ENCODE measurements at regions of chr17 and their contacts with region 1.

Region 1: DNA sequence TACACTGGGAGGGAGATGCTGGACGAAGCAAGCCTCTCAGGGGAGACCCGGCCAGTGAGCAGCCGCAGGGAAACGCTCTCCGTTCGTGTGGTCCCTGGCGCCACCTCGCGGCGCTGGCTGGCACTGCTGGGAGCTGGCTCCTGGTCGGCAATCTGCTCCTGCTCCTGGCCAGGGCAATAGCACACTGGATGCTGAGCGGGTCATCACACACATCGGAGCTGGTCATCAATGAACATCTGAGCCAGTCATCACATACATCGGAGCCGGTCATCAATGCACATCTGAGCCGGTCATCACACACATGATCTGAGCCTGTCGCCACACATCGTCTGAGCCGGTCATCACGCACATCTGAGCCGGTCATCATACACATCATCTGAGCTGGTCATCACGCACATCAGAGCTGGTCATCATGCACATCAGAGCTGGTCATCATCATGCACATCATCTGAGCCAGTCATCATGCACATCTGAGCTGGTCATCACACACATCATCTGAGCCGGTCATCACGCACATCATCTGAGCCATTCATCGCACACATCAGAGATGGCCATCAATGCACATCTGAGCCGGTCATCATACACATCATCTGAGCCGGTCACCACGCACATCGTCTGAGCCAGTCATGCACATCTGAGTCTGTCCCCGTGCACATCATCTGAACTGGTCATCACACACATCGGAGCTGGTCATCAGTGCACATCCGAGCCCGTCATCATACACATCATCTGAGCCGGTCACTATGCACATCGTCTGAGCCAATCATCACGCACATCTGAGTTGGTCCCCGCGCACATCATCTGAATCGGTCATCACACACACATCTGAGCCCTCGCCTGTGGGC is 217.3 kb downstream of the RBFOX3 start:
- DNase-seq: peak; percentile 84
- CTCF ChIP-seq: peak; percentile 94

Region 2: DNA sequence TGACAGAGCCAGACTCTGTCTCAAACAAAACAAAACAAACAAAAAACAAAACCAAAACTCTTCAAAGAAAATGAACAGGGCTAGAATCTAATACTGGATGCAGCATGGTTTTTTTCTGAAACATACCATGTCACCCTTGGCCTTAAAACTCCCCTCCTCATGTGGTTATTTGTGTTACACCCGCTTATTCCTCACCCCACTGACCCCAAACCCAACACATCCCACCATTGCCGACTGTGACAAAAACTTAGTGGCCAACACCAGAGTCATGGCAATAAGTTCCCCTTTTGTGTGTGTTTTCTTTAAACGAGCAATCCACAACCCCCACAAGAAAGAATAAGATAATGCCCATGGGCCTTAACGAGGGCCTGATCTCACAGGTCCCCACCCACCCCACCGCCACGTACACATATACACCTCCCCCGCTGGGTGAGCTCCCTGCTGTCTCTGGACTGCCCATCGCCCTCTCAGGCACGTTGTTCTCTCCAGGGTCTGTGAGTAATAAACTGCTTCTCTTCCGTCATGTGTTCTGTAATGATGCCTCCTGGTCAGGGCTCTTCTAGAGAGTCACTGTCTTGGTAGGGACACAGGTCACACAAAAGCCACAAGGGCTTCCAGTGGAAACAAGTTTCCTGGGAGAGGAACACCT is 335.7 kb before region 1 on chr17:
- CTCF ChIA-PET with region 1: interaction called, 33 read pairs
- POLR2A ChIA-PET with region 1: no interaction called
- DNase-seq: peak; percentile 11
- CTCF ChIP-seq: no peak

Region 3: DNA sequence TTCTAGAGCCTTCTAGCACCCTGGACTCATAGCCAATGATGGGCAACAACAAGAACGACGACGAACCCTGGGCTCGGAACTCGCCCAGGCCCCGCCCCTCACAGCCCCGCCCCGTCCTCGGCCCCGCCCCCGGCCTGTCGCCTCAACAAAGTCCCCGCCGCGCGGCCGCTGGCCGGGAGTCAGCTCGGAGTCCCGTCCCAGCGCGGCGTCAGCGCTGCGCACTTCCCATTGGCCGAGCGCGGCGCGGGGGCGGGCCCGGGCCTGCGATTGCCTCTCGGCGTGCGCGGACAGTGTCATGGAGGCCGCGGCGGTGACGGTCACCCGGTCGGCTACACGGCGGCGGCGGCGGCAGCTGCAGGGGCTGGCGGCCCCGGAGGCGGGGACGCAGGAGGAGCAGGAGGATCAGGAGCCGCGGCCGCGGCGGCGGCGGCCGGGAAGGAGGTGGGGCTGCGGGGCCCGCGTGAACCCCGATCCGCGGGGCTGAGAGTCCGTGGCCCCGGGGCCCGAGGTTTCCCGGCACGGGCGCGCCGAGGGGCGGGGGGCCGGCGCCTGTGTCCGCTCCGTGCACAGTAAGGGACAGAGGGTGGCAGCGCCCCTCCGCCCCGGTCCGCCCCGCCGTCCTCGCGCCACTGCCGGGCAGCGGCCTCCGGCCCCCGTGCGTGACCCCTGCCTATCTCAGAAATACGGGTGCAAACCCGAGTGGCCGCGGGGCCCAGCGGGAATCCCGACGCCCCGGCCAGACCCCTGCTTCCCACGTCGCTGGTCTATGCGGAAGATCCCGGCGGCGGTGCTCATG is 318.7 kb before region 1 on chr17 and contains the start of gene ENGASE:
- CTCF ChIA-PET with region 1: interaction called, 13 read pairs
- POLR2A ChIA-PET with region 1: interaction called, 4 read pairs
- DNase-seq: peak; percentile 99
- CTCF ChIP-seq: no peak

Region 4: DNA sequence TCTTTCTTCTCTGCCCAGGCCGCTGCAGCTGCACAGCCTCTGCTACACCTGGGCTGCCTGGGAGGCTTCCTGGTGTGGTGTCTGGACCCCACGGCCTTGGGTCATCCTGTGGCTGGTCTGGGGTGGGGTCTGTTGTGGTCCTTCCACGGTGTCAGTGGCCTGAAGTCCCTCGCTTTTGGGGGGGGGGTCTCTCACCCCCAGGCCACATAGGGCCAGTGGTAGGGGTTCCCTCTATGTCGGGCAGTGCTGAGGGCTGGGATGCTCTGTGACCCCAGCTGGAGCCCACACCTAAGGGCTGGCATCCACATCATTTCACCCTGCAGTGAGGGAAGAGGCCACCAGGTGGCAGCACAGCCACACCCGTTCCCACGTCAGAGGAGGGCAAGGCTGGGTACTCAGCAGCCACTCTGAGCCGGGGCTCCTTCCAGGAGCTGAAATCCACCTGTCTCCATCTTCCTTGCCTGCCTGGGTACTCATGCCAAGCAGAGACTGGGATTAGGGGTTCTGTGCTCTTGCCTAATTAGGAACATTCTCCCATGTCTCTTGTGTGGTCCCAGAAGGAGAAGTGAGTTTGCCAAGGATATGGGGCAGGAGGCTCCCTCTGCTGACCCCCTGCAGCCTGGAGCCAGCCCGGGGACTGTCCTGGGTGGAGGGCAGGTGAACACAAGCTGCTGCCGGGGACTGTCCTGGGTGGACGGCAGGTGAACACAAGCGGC is 306.0 kb before region 1 on chr17:
- CTCF ChIA-PET with region 1: interaction called, 204 read pairs
- POLR2A ChIA-PET with region 1: no interaction called
- DNase-seq: peak; percentile 85
- CTCF ChIP-seq: peak; percentile 86

Region 5: DNA sequence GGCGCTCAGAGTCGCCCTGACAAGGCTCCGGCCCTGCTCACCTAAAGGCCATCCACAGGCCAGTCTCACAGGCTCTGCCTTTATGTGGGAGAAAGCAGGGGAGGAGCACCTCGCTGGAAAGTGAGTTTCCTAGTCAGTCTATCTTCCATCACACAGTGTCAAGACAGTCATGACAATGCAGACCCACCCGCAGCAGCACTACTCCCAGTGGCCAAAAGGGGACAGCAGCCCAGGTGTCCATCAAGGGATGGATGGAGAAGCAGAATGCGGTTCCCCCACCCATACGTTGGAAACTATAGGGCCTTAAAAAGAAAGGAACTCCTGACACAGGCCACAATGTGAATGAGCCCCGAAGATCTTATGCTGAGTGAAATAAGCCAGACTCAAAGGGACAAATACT is 92.1 kb before region 1 on chr17:
- CTCF ChIA-PET with region 1: no interaction called
- POLR2A ChIA-PET with region 1: no interaction called
- DNase-seq: no peak
- CTCF ChIP-seq: no peak

Region 6: DNA sequence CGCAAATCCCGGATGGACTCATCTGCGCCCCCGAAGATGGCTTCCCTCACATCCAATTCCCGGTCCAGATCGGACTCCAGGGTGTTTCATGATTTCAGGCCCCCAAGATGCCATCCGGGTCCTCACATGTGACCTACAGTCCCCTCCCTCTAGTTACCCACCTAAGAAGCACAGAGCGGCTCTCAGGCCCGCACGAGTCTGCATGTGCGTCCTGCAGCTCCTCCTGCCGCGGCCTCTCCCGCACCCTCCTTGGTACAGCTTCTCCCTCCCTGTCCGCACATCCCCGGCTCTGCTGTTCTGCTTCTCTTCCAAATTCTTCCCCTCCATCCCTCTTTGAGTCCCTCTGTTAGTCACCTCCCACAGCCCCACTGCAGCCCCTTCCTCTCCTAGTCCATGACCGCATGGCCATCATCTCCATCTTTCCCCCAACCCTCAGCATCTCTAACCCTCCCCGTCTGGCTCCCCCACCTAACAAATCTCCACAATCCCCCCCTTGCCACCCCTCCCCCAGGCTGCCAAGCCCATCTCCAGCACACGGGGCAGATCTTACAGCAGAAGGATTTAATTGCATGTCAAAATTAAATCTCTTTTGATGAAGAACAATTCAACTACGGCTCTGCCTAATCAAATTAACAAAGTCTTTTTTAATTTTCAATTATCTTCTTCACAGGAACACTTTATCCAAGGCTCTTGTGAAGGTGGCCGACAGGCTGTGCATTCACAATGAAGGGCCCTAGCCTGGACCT is 13.7 kb before region 1 on chr17:
- CTCF ChIA-PET with region 1: interaction called, 13 read pairs
- POLR2A ChIA-PET with region 1: no interaction called
- DNase-seq: no peak
- CTCF ChIP-seq: no peak

Measured in GM10248 (cell line).